Body of pancreas (tissue), 4 donors: ENCODE measurements at regions of chr7 and their contacts with region 1.

Region 1: DNA sequence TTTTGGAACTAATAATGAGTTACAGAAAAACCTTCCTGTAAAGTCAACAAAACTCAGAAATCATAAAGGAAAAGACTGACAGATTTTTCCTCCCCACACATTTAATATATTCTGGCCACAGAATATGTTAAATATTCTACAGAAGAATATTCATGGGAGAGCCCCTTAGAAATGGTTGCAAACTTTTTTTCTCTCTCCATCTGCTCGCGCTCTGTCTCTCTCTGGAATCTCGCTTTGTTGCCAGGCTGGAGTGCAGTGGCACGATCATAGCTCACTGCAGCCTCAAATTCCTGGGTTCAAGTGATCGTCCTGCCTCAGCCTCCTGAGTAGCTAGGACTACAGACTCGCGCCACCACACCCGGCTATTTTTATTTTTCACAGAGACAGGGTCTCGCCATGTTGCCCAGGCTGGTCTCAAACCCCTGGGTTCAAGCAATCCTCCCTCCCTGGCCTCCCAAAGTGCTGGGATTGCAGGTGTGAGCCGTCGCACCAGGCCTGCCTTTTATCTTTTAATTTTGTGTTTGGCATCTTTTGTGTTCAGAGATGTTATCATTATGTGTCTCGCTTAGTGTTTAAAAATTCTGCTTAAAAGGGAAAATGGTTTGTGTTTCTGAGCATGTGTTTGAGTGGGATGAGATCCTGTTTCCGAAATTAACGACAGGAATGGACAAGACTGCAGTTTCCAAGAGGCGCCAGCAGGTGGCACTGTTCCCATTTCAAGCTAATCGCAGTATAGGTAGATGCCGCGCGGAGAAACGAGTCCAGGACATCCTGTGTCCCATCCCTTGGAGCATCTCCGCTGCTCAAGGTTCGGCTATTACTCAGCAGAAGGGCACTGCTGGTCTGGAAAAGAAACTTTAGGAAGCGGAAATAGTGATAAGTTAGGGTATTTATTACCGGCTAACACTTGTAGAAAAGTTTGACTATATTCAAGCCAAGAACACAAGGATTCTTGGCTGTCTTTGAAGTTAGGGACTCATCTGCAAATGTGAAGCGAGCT is 23.1 kb upstream of the ST7 start:
- DNase-seq: peak; percentile 78 to 86 (median 83)
- ATAC-seq: peak; percentile 87
- H3K4me3 ChIP-seq: no peak overlapping the region
- H3K27ac ChIP-seq: no peak overlapping the region
- H3K4me1 ChIP-seq: no peaks in the 10 kb centered on the region
- H3K27me3 ChIP-seq: no peaks in the 10 kb centered on the region
- CTCF ChIP-seq: peak; percentile 82 to 93 (median 89)
- POLR2A ChIP-seq: no peak

Region 2: DNA sequence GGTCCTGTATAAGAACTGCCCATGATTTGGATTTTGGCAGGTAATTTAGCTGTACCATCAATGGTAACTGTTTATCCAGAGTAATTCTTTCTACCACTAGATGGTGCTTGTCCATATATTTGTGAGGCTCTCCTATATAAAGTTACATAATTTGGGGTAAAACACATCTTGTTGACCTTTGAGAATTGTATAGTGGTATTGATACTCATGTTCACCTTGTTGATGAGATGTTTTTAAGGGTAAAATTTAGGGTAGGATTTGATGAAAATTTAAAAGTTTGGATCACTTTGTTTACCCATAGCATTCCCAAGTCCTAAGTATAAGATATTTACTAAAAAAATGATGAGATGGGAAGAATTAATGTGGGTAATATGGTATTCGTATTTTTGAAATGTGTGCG is 54.7 kb after region 1 on chr7:
- intact Hi-C with region 1: loop called (anchors 10 kb)
- DNase-seq: no peak
- ATAC-seq: peak; percentile 30
- H3K4me3 ChIP-seq: no peak overlapping the region
- H3K27ac ChIP-seq: no peak overlapping the region
- H3K4me1 ChIP-seq: no peaks in the 10 kb centered on the region
- H3K27me3 ChIP-seq: no peaks in the 10 kb centered on the region
- CTCF ChIP-seq: peak; percentile 36 to 69 (median 62)
- POLR2A ChIP-seq: no peak

Region 3: GRCh38 chr7:117127585-117128168 is 197.5 kb after region 1 on chr7:
- intact Hi-C with region 1: loop called (anchors 5 kb)
- DNase-seq: peak; percentile 48 to 67 (median 66)
- ATAC-seq: peak; percentile 49
- H3K4me3 ChIP-seq: no peak overlapping the region
- H3K27ac ChIP-seq: no peak overlapping the region
- H3K4me1 ChIP-seq: peaks cover 11% of the 10 kb centered on the region
- H3K27me3 ChIP-seq: no peaks in the 10 kb centered on the region
- CTCF ChIP-seq: peak; percentile 36 to 80 (median 70)
- POLR2A ChIP-seq: no peak